ENCODE measurements at regions of chr14 and their contacts with region 1.

Region 1: GRCh38 chr14:23301288-23301968 is 1.2 kb downstream of the PPP1R3E start:
- DNase-seq: peak; percentile 98 to 99 (median 99)
- ATAC-seq: peak; percentile 76 to 90 (median 85)
- H3K4me3 ChIP-seq: peak overlapping the region; percentile 77 to 95 (median 82)
- H3K27ac ChIP-seq: peak overlapping the region; percentile 94 to 100 (median 98)
- H3K4me1 ChIP-seq: peaks cover 0 to 61% (median 33%) of the 10 kb centered on the region in 12 donors
- H3K27me3 ChIP-seq: no peaks in the 10 kb centered on the region
- CTCF ChIP-seq: peak; percentile 53 to 98 (median 73)
- POLR2A ChIP-seq: no peak

Region 2: GRCh38 chr14:23095196-23096108 is 206.0 kb before region 1 on chr14 and contains the start of gene C14orf119:
- intact Hi-C with region 1: loop called in 1 of 10 experiments (anchors 10 kb)
- DNase-seq: peak; percentile 94 to 100 (median 100)
- ATAC-seq: peak; percentile 92 to 96 (median 96)
- H3K4me3 ChIP-seq: peak within 1 kb of the TSS; percentile 57 to 96 (median 81)
- H3K27ac ChIP-seq: peak within 1 kb of the TSS; percentile 92 to 99 (median 97)
- H3K4me1 ChIP-seq: peaks cover 5 to 69% (median 42%) of the 10 kb centered on the region in 12 donors
- H3K27me3 ChIP-seq: no peaks in the 10 kb centered on the region
- CTCF ChIP-seq: no peak
- POLR2A ChIP-seq: peak; percentile 12 to 69
- total RNA-seq, gene C14orf119: 15.3 to 35.9 (median 29.6) TPM

Region 3: GRCh38 chr14:23120541-23121251 is 180.7 kb before region 1 on chr14:
- intact Hi-C with region 1: loop called in 6 of 10 experiments (anchors 2 to 10 kb)
- DNase-seq: peak; percentile 88 to 94 (median 90)
- ATAC-seq: peak; percentile 75 to 86 (median 80)
- H3K4me3 ChIP-seq: no peak overlapping the region
- H3K27ac ChIP-seq: peak overlapping the region in 5 of 12 donors; percentile 10 to 79 (median 15)
- H3K4me1 ChIP-seq: peaks cover 0 to 31% (median 8%) of the 10 kb centered on the region in 12 donors
- H3K27me3 ChIP-seq: peaks cover 0 to 3% (median 0%) of the 10 kb centered on the region in 9 donors
- CTCF ChIP-seq: peak; percentile 99 to 100 (median 100)
- POLR2A ChIP-seq: no peak

Region 4: GRCh38 chr14:23259426-23259825 is 42.0 kb before region 1 on chr14:
- intact Hi-C with region 1: loop called in 1 of 10 experiments (anchors 2 kb)
- DNase-seq: no peak
- ATAC-seq: no peak
- H3K4me3 ChIP-seq: no peak overlapping the region
- H3K27ac ChIP-seq: no peak overlapping the region
- H3K4me1 ChIP-seq: no peaks in the 10 kb centered on the region
- H3K27me3 ChIP-seq: peaks cover 0 to 18% (median 4%) of the 10 kb centered on the region in 9 donors
- CTCF ChIP-seq: no peak
- POLR2A ChIP-seq: no peak

Region 5: GRCh38 chr14:23286020-23286905 is 15.2 kb before region 1 on chr14 and contains the start of gene HOMEZ:
- intact Hi-C with region 1: loop called in 4 of 10 experiments (anchors 1 to 2 kb)
- DNase-seq: peak; percentile 100
- ATAC-seq: peak; percentile 98 to 100 (median 99)
- H3K4me3 ChIP-seq: peak within 1 kb of the TSS; percentile 65 to 97 (median 88)
- H3K27ac ChIP-seq: peak within 1 kb of the TSS; percentile 70 to 99 (median 96)
- H3K4me1 ChIP-seq: peaks cover 0 to 27% (median 17%) of the 10 kb centered on the region in 12 donors
- H3K27me3 ChIP-seq: no peaks in the 10 kb centered on the region
- CTCF ChIP-seq: peak in 8 of 12 donors; percentile 18 to 62 (median 36)
- POLR2A ChIP-seq: peak in 1 of 2 donors; percentile 81
- total RNA-seq, gene HOMEZ: 7.7 to 13.0 (median 10.0) TPM

Region 6: GRCh38 chr14:23555882-23556699 is 254.7 kb after region 1 on chr14 and contains the start of gene THTPA:
- intact Hi-C with region 1: loop called in 1 of 10 experiments (anchors 10 kb)
- DNase-seq: peak; percentile 93 to 97 (median 95)
- ATAC-seq: peak; percentile 86 to 96 (median 94)
- H3K4me3 ChIP-seq: peak within 1 kb of the TSS; percentile 56 to 100 (median 92)
- H3K27ac ChIP-seq: peak within 1 kb of the TSS; percentile 90 to 100 (median 97)
- H3K4me1 ChIP-seq: peaks cover 0 to 35% (median 21%) of the 10 kb centered on the region in 12 donors
- H3K27me3 ChIP-seq: no peaks in the 10 kb centered on the region
- CTCF ChIP-seq: no peak
- POLR2A ChIP-seq: peak in 1 of 2 donors; percentile 52
- total RNA-seq, gene THTPA: 13.0 to 30.9 (median 18.9) TPM

Region 7: GRCh38 chr14:23708343-23708742 is 406.9 kb after region 1 on chr14:
- intact Hi-C with region 1: no loop called
- DNase-seq: no peak
- ATAC-seq: no peak
- H3K4me3 ChIP-seq: no peak overlapping the region
- H3K27ac ChIP-seq: no peak overlapping the region
- H3K4me1 ChIP-seq: no peaks in the 10 kb centered on the region
- H3K27me3 ChIP-seq: no peaks in the 10 kb centered on the region
- CTCF ChIP-seq: no peak
- POLR2A ChIP-seq: no peak